Colonic mucosa (tissue), 4 donors: ENCODE measurements at regions of chr14 and their contacts with region 1.

Region 1: DNA sequence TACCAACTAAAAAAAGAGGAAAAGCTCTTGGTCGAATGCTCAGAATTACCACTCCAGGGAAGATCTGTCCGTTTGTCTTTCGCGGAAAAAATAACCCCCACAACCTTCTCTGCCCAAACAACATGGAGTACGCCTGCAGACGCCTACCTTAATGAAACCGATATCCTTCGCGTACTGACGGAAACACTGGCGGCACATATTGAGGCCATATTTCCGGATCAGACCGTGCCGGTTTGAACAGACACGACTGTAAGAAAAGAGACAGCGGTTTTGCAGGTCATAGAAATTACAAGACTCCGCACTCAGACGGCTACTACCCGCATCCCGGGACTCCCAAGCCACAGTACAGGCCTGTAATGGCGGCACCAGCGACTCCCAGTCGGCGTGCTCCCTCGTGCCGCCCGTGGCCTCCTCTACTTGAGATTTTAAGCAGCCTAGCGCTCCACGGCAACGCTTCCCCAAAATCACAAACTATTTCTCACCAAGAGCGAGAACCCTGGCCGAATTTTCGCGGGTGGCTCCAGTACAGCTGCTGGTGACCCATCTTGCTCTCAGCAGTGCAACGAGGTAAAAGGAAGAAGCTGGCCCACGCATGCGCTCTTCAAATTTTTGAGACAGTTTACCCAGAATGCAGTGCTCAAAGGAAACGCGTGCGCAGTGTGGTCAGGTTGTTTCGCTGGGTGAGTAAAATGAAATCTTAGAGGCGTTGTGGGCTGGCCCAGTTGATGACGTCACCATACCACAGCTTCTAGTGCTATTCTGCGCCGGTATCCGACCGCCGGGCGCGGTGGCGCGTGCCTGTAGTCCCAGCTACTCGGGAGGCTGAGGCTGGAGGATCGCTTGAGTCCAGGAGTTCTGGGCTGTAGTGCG is at the start of gene RPS29:
- DNase-seq: peak; percentile 98
- H3K4me3 ChIP-seq: peak within 1 kb of the TSS; percentile 66
- H3K27ac ChIP-seq: peak within 1 kb of the TSS; percentile 88
- H3K4me1 ChIP-seq: no peaks in the 10 kb centered on the region
- H3K27me3 ChIP-seq: no peaks in the 10 kb centered on the region
- CTCF ChIP-seq: no peak
- total RNA-seq, gene RPS29: 1,421 to 1,478 TPM

Region 2: GRCh38 chr14:49620182-49621113 is 34.4 kb after region 1 on chr14 and contains the starts of genes MGAT2 and RPL36AL:
- intact Hi-C with region 1: loop called (anchors 5 kb)
- DNase-seq: peak; percentile 99
- H3K4me3 ChIP-seq: peak within 1 kb of the TSS; percentile 68
- H3K27ac ChIP-seq: peak within 1 kb of the TSS; percentile 96
- H3K4me1 ChIP-seq: peaks cover 9% of the 10 kb centered on the region
- H3K27me3 ChIP-seq: no peaks in the 10 kb centered on the region
- CTCF ChIP-seq: no peak
- total RNA-seq, gene MGAT2: 44.9 to 47.3 TPM
- total RNA-seq, gene RPL36AL: 197 to 198 TPM